Activated CD8-positive, alpha-beta T cell treated with anti-CD3 and anti-CD28 coated beads, Interleukin-2, amount 10 ng/mL, durations not matched to agents 7 days and 5 days (primary cell): ENCODE measurements at regions of chr14 and their contacts with region 1.

Region 1: DNA sequence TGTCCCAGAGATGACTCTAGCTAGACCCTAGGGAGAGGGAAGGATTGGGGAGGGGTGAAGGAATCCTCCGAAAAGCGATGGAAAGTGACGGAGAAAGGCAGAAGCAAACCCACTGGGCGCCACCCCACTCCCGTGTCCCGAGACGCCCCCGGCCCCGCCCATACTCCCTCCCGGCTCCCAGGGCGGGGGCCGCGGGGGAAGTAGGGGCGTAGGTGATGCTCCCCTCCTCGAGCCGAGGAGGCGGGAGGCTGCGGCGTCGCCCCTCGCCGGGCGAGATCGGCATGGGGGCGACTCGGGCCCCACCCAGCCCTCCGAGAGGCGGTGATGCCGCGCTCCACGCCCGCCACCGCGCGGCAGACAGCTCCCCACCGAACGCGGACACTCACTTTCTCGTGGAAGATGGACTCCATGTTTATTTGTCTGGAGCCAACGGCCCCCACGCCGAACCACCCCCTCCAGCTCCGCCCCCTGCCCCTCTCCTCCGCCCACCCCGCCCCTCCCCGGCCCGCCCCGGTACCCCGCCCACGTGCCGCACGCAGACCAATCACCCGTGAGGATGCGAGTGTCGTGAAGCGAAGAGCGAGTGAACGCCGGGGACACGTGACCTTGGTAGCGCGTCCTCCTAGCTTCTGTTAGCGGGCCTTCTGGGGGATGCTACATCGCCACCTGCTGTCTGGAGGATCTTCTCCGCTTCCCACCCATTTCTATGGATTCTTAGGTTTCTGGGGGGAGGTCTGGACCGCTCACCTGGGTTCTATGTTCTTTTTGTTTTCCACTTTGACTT is at the start of gene ATXN3:
- DNase-seq: peak; percentile 97
- ATAC-seq: peak; percentile 96
- H3K4me3 Mint-ChIP-seq: peak within 1 kb of the TSS; percentile 87
- H3K27ac Mint-ChIP-seq: peak within 1 kb of the TSS; percentile 89
- H3K4me1 Mint-ChIP-seq: peaks cover 33% of the 10 kb centered on the region
- H3K27me3 Mint-ChIP-seq: no peaks in the 10 kb centered on the region
- total RNA-seq, gene ATXN3: 25.8 to 26.0 TPM

Region 2: DNA sequence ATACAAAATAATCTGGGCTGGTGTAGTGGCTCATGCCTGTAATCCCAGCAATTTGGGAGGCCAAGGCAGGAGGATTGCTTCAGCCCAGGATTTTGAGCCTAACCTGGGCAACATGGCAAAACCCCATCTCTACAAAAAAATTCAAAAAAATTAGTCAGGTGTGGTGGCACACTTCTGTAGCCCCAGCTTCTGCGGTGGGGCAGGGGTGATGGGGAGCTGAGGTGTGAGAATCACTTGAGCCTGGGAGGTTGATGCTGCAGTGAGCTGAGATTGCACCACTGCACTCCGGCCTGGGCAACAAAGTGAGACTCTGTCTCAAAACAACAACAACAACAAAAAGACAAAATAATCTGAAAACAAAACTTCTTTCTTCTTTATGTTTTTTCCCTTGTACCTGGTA is 305.0 kb before region 1 on chr14:
- CTCF ChIA-PET with region 1: no interaction called
- POLR2A ChIA-PET with region 1: no interaction called
- DNase-seq: no peak
- ATAC-seq: no peak
- H3K4me3 Mint-ChIP-seq: no peak overlapping the region
- H3K27ac Mint-ChIP-seq: no peak overlapping the region
- H3K4me1 Mint-ChIP-seq: peaks cover 12% of the 10 kb centered on the region
- H3K27me3 Mint-ChIP-seq: no peaks in the 10 kb centered on the region

Region 3: GRCh38 chr14:92039719-92040430 is 66.5 kb before region 1 on chr14 and contains the start of gene TRIP11:
- CTCF ChIA-PET with region 1: interaction called, 29 read pairs
- POLR2A ChIA-PET with region 1: interaction called, 25 read pairs
- DNase-seq: peak; percentile 98
- ATAC-seq: peak; percentile 95
- H3K4me3 Mint-ChIP-seq: peak within 1 kb of the TSS; percentile 96
- H3K27ac Mint-ChIP-seq: peak within 1 kb of the TSS; percentile 94
- H3K4me1 Mint-ChIP-seq: peaks cover 41% of the 10 kb centered on the region
- H3K27me3 Mint-ChIP-seq: no peaks in the 10 kb centered on the region
- total RNA-seq, gene TRIP11: 43.6 to 44.5 TPM

Region 4: GRCh38 chr14:92057976-92058917 is 48.1 kb before region 1 on chr14:
- CTCF ChIA-PET with region 1: interaction called, 10 read pairs
- POLR2A ChIA-PET with region 1: no interaction called
- DNase-seq: no peak
- ATAC-seq: no peak
- H3K4me3 Mint-ChIP-seq: no peak overlapping the region
- H3K27ac Mint-ChIP-seq: no peak overlapping the region
- H3K4me1 Mint-ChIP-seq: no peaks in the 10 kb centered on the region
- H3K27me3 Mint-ChIP-seq: no peaks in the 10 kb centered on the region

Region 5: DNA sequence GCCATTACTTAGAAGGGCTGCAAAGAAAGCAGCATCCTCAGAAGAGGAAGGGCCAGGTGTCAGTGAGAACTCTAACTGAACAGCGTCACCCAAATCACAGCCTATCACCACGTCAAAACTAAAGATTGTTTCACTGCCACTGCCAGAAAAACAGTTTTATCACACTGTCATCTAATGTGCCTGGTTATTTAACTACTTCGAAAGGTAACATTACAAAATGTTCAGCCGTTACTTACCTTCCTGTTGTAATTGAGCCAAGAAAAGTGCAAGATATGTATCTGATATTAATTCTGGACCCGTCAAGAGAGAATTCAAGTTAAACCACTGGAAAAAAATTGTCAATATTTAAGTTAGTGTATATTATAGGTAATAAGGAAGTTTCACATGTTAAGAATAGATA is 17.8 kb before region 1 on chr14:
- CTCF ChIA-PET with region 1: interaction called, 14 read pairs
- POLR2A ChIA-PET with region 1: no interaction called
- DNase-seq: no peak
- ATAC-seq: no peak
- H3K4me3 Mint-ChIP-seq: no peak overlapping the region
- H3K27ac Mint-ChIP-seq: no peak overlapping the region
- H3K4me1 Mint-ChIP-seq: no peaks in the 10 kb centered on the region
- H3K27me3 Mint-ChIP-seq: no peaks in the 10 kb centered on the region

Region 6: DNA sequence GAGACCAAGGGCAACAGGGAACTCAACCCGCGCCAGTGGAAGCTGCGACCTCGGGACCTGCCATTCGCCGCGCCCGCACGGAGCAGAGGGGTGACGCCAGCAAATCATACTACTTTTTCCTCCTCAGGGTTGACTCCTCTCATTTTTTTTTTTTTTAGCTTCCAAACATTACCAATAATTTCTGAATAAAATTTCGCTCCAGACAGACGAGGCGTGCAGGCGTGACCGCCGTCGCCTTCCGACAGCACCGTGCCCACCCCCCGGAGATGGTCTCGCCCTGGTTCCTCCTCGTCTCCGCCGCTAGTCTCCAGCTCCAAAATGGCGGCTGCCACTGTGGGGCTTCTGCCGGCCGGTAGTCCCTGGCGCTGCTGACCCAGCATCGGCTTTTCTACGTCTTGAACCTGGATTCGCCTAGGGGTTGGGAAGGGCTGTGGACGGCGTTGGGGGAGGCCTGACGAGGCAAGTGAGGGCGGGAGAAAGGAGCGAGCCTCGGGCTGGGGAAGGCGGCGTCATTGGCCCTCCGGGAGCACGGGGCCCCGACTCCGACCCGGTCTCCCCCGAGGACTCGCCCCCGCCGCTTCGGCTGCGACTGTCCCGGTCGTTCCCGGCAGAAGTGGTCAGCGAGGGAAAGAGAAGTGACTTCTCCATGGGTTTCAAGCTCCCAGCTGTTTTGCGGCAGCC is 15.5 kb after region 1 on chr14 and contains the starts of genes CPSF2 and NDUFB1:
- CTCF ChIA-PET with region 1: interaction called, 213 read pairs
- POLR2A ChIA-PET with region 1: interaction called, 31 read pairs
- DNase-seq: peak; percentile 88
- ATAC-seq: peak; percentile 93
- H3K4me3 Mint-ChIP-seq: peak within 1 kb of the TSS; percentile 97
- H3K27ac Mint-ChIP-seq: peak within 1 kb of the TSS; percentile 100
- H3K4me1 Mint-ChIP-seq: peaks cover 48% of the 10 kb centered on the region
- H3K27me3 Mint-ChIP-seq: no peaks in the 10 kb centered on the region
- total RNA-seq, gene CPSF2: 63.7 to 85.4 TPM
- total RNA-seq, gene NDUFB1: 127 to 130 TPM

Region 7: DNA sequence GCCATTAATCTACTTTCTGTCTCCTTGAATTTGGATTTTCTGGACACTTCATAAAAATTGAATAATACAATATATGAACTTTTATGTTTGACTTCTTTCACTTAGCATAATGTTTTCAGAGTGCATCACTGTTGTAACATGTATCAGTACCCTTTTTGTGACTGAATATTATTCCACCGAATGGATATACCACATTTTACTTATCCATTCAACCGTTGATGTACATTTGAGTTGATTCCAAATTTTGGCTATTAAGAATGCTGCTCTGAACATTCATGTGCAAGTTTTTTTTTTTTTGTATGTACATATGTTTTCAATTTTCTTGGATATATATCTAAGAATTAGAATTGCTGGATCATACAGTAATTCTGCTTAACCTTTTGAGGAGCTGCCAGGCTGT is 58.6 kb after region 1 on chr14:
- CTCF ChIA-PET with region 1: no interaction called
- POLR2A ChIA-PET with region 1: no interaction called
- DNase-seq: no peak
- ATAC-seq: no peak
- H3K4me3 Mint-ChIP-seq: no peak overlapping the region
- H3K27ac Mint-ChIP-seq: no peak overlapping the region
- H3K4me1 Mint-ChIP-seq: no peaks in the 10 kb centered on the region
- H3K27me3 Mint-ChIP-seq: no peaks in the 10 kb centered on the region